ENCODE measurements at regions of chr16 and their contacts with region 1.

Region 1: DNA sequence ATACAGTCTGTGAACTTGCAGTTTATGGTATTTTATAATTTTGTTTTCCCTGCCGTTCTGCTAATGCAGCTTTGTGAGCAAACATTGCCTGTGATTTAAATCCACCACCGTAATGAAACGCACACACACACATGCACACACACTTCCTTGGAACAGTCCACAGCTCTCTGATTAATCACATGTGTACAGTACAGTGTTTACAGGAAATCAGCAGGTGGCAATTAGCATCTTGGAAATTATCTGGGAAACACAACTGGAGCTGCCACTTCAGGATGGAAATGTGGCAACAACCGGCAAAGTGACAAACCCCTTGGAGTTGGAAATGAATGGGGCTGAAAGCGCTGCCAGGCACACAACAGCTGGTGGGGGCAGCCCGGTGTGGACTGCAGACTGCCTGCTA is 12.9 kb upstream of the ZKSCAN2 start:
- DNase-seq: no peak
- ATAC-seq: no peak
- H3K4me3 ChIP-seq: no peak overlapping the region
- H3K27ac ChIP-seq: no peak overlapping the region
- H3K4me1 ChIP-seq: no peaks in the 10 kb centered on the region
- H3K27me3 ChIP-seq: no peaks in the 10 kb centered on the region
- CTCF ChIP-seq: no peak

Region 2: DNA sequence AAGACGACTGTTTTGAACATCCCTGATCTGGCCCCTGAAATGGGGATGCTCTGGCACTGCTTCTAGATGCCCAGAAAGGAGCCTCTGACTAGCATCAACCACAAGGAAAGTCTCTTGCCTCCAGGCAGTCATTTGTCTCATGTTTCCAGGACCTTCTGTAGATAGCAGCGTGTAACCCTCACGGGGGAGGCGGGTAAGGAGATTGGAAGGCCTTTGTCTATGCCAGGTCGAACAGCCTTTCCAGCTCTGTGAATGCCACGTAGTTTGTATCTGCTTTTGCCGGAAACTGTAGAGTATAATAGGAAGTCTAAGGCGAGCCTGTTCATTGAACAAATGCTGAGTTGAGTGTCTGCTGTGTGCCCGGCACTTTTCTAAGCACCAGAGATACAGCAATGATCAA is 97.8 kb before region 1 on chr16:
- intact Hi-C with region 1: no loop called
- DNase-seq: no peak
- ATAC-seq: no peak
- H3K4me3 ChIP-seq: no peak overlapping the region
- H3K27ac ChIP-seq: no peak overlapping the region
- H3K4me1 ChIP-seq: no peaks in the 10 kb centered on the region
- H3K27me3 ChIP-seq: no peaks in the 10 kb centered on the region
- CTCF ChIP-seq: no peak

Region 3: DNA sequence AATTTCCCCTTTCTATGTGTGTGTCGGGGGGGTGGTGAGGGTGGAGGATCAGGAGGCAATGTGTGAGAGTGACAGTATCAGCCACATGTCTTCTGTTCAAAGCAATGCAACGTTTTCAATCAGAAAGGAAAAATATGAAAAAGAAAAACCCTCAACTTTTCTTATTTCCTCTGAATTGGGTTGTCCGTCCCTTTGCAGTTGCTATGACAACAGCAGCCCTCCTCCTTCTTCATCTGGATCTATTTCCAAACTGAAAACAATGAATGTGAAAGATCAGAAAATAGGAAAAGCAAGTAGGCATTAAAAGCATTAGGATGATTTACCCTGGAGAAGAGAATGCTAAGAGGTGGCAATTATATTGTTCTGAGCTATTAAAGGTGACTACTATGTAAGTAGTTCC is 51.4 kb after region 1 on chr16:
- intact Hi-C with region 1: no loop called
- DNase-seq: no peak
- ATAC-seq: no peak
- H3K4me3 ChIP-seq: no peak overlapping the region
- H3K27ac ChIP-seq: no peak overlapping the region
- H3K4me1 ChIP-seq: no peaks in the 10 kb centered on the region
- H3K27me3 ChIP-seq: peaks cover 0 to 4% (median 0%) of the 10 kb centered on the region in 7 donors
- CTCF ChIP-seq: no peak

Region 4: DNA sequence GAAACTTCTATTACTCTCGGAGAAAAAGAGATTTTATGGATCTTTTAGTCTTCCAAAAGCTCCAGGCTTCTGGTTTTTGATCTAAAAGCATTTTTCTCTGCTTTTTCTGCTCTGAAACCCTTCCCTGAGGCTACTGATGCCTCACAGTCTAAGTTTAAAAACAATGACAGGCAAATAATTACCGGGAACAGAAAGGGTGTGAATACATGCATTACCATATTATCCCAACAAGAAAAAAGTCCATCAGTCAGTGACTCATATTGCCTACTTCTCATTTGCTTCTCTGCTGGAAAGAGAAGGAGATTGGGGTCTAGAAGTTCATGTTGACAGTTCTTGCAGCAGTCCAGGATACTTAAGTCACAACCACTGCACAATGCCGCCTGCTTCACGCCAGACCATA is 1313.2 kb after region 1 on chr16:
- intact Hi-C with region 1: loop called in 1 of 10 experiments (anchors 10 kb)
- DNase-seq: no peak
- ATAC-seq: no peak
- H3K4me3 ChIP-seq: no peak overlapping the region
- H3K27ac ChIP-seq: no peak overlapping the region
- H3K4me1 ChIP-seq: no peaks in the 10 kb centered on the region
- H3K27me3 ChIP-seq: peaks cover 0 to 9% (median 0%) of the 10 kb centered on the region in 7 donors
- CTCF ChIP-seq: no peak